ENCODE measurements at regions of chr7 and their contacts with region 1.

Region 1: DNA sequence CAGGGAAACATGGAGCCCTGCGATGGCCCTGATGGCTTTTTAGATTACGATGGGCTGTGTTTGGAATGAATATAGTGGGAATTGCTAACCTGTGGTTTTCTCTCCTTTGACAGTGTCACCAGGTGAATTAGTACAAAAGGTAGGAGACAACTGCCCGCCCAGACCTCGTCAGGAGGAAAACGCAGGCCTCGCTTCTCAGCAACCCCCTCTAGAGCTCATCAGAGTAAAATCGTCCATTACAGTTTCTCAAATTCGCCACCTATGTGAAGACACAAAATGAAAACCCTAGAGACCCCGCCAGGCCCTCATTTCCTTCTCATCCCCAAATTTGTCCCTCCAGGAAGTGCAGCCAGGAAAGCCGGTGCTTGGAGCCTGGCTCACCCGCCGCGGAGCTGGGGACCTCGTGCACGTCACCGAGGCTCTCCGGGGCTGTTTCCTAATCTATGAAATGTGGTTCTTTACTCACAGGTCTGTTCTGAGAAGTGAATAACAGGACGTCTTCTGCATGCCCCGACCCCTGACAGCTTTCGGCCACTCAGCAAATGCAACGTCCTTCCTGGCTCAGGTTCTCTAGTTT is 143.7 kb downstream of the VIPR2 start:
- DNase-seq: no peak
- H3K4me3 ChIP-seq: no peak overlapping the region
- H3K27ac ChIP-seq: no peak overlapping the region
- H3K4me1 ChIP-seq: peaks cover 0 to 8% (median 1%) of the 10 kb centered on the region in 4 experiments; a peak in 2 of 7 replicates
- H3K27me3 ChIP-seq: peaks cover 10 to 19% (median 18%) of the 10 kb centered on the region in 4 experiments
- CTCF ChIP-seq: peak; percentile 37 to 43 (median 41); a peak in 3 of 4 replicates
- EP300 ChIP-seq: no peak
- POLR2A ChIP-seq: no peak
- RAD21 ChIP-seq: peak; percentile 36 to 46; a peak in 3 of 4 replicates

Region 2: DNA sequence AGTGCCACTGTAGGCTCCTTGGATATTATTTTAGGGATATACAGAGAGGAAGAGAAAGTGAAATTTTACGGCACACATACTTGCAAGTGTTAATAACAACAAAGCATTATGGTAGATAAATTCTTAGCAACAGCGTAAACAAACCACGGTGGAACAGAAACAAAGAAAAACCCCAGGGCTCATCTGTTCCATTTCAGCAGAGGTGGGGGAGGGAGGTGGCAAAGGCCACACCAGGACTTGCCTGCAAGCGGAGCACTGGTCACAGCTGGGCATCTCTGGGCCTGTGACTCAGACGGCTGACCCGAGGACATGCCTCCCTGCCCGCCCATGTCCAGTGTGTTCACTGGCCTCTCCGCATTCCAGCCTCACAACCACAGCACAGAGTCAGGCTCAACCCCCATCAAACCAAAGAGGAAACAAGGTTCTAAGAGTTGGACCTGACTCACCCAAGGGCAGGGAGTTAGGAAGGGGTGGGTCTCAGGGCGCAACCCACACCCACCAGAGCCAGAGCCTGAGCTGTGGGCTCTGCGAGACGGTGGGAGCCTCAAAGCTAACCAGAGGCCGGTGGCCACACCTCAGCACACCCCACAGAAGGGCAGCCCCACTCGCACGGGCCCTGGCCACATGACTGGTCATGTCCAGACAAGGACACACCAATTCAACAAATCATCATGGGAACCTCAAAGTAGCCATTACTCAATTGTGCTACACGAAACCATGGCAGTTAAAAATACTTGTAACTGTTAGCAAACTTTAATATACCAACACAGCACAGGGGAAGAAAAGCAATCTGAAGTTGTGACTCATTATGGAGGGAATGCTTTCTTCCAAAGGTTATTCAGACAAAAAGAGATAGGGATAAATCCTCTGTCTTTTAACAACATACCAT is 182.4 kb before region 1 on chr7:
- CTCF ChIA-PET with region 1: no interaction called
- POLR2A ChIA-PET with region 1: no interaction called
- DNase-seq: peak; percentile 50 to 56
- H3K4me3 ChIP-seq: peak overlapping the region in 3 of 4 experiments; percentile 20 to 34 (median 22); a peak in 4 of 8 replicates
- H3K27ac ChIP-seq: peak overlapping the region; percentile 87
- H3K4me1 ChIP-seq: peaks cover 14 to 30% (median 20%) of the 10 kb centered on the region in 4 experiments
- H3K27me3 ChIP-seq: no peaks in the 10 kb centered on the region
- CTCF ChIP-seq: no peak
- EP300 ChIP-seq: 0 out of 3 replicates have a peak, but pooled peaks of 1 of the 2 experiments have one; percentile 11
- POLR2A ChIP-seq: no peak
- RAD21 ChIP-seq: peak in 1 of 2 experiments; percentile 7; a peak in 1 of 4 replicates

Region 3: GRCh38 chr7:159015454-159016410 is 14.8 kb after region 1 on chr7:
- CTCF ChIA-PET with region 1: interaction called, 15 read pairs
- POLR2A ChIA-PET with region 1: no interaction called
- DNase-seq: no peak
- H3K4me3 ChIP-seq: no peak overlapping the region
- H3K27ac ChIP-seq: no peak overlapping the region
- H3K4me1 ChIP-seq: peaks cover 1 to 5% (median 3%) of the 10 kb centered on the region in 4 experiments; a peak in 3 of 7 replicates
- H3K27me3 ChIP-seq: no peaks in the 10 kb centered on the region
- CTCF ChIP-seq: no peak
- EP300 ChIP-seq: no peak
- POLR2A ChIP-seq: no peak
- RAD21 ChIP-seq: no peak

Region 4: GRCh38 chr7:159030490-159031134 is 29.7 kb after region 1 on chr7:
- CTCF ChIA-PET with region 1: interaction called, 11 read pairs
- POLR2A ChIA-PET with region 1: no interaction called
- DNase-seq: peak; percentile 27 to 87
- H3K4me3 ChIP-seq: peak overlapping the region; percentile 50 to 74 (median 64)
- H3K27ac ChIP-seq: no peak overlapping the region
- H3K4me1 ChIP-seq: peaks cover 0 to 20% (median 13%) of the 10 kb centered on the region in 4 experiments; a peak in 6 of 7 replicates
- H3K27me3 ChIP-seq: peaks cover 0 to 3% (median 2%) of the 10 kb centered on the region in 4 experiments; a peak in 3 of 7 replicates
- CTCF ChIP-seq: peak in 2 of 3 experiments; percentile 47 to 50; a peak in 3 of 4 replicates
- EP300 ChIP-seq: no peak
- POLR2A ChIP-seq: no peak; a peak in 1 of 3 replicates
- RAD21 ChIP-seq: peak; percentile 32 to 37; a peak in 3 of 4 replicates

Measured in H1 (cell line).